ENCODE measurements at regions of chr9 and their contacts with region 1.

Region 1: DNA sequence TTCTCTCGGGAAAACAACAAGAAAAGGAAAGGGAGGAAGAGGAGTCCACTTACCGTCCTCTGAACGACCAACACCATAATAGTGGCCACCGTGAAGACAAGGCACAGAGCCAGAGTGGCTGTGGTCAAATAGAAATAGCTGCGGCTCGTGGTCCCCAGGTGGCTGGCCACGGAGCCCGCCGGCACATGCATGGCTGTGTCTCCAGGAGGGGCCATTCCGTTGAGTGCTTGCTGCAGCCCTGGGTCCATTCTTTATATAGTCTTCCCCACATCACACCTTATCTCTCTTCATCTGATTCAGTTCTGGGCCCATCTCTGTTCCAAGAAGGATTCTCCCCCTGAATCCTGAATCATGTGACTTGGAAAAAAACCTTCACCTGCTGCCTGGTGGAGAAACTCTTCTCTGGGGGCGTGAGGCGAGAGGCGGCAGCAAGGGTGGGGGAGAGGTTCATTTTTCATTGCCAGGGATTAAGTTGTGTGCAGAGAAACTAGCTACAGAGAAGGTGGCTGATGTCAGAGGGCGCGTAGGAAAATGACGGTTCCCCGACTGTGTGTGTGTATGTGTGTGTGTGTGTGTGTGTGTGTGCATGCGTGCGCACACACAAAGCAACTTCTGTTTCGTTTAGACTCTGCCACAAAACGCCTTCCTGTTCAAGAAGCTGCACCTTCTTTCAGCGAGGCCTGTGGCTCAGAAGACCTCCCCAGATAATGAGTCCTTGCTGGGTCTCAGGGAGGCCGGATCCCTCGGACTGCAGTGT is at the start of gene TNFSF8:
- DNase-seq: peak; percentile 90
- ATAC-seq: peak; percentile 85
- H3K4me3 Mint-ChIP-seq: peak within 1 kb of the TSS; percentile 85
- H3K27ac Mint-ChIP-seq: peak within 1 kb of the TSS; percentile 98
- H3K4me1 Mint-ChIP-seq: peaks cover 49% of the 10 kb centered on the region
- H3K27me3 Mint-ChIP-seq: no peaks in the 10 kb centered on the region
- total RNA-seq, gene TNFSF8: 42.3 to 48.2 TPM

Region 2: GRCh38 chr9:114397848-114398605 is 532.2 kb before region 1 on chr9:
- CTCF ChIA-PET with region 1: no interaction called
- POLR2A ChIA-PET with region 1: no interaction called
- intact Hi-C with region 1: loop called in 1 of 2 experiments (anchors 5 kb)
- DNase-seq: peak; percentile 98
- ATAC-seq: peak; percentile 87
- H3K4me3 Mint-ChIP-seq: peak overlapping the region; percentile 93
- H3K27ac Mint-ChIP-seq: peak overlapping the region; percentile 89
- H3K4me1 Mint-ChIP-seq: peaks cover 46% of the 10 kb centered on the region
- H3K27me3 Mint-ChIP-seq: no peaks in the 10 kb centered on the region

Region 3: DNA sequence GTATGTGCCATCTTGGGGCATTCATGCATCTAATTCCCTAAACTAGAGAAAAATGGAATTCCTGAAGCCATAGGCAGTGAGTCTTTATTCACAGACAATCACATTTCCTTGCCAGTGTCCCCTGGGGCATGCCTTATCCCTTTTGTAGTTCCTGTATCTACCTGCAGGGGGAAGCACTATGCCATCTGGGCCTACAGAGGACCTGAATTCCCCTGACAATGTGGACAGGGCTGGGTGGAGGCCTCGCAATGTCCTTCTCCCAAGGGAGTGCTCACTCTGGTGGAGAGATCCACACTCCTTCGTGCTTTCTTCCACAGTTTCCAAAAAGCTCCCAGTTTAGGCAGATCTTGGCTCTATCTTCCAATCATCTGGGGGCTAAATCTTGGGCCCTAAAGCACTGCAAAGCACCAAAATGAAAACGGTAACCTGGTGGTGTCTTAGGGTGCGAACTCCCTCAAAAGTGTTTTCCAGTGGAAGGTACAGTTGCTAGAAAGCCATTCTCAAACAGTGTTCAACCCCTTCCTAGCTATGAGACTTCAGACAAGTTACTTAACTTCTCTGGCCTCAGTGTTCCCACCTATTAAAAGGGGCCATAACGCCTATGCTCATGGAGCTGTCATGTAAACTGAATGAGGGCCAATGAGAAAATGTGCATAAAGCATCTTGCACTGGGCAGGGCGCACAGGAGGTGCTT is 442.5 kb before region 1 on chr9:
- CTCF ChIA-PET with region 1: no interaction called
- POLR2A ChIA-PET with region 1: no interaction called
- intact Hi-C with region 1: no loop called
- DNase-seq: peak; percentile 72
- ATAC-seq: peak; percentile 63
- H3K4me3 Mint-ChIP-seq: no peak overlapping the region
- H3K27ac Mint-ChIP-seq: no peak overlapping the region
- H3K4me1 Mint-ChIP-seq: peaks cover 25% of the 10 kb centered on the region
- H3K27me3 Mint-ChIP-seq: no peaks in the 10 kb centered on the region

Region 4: DNA sequence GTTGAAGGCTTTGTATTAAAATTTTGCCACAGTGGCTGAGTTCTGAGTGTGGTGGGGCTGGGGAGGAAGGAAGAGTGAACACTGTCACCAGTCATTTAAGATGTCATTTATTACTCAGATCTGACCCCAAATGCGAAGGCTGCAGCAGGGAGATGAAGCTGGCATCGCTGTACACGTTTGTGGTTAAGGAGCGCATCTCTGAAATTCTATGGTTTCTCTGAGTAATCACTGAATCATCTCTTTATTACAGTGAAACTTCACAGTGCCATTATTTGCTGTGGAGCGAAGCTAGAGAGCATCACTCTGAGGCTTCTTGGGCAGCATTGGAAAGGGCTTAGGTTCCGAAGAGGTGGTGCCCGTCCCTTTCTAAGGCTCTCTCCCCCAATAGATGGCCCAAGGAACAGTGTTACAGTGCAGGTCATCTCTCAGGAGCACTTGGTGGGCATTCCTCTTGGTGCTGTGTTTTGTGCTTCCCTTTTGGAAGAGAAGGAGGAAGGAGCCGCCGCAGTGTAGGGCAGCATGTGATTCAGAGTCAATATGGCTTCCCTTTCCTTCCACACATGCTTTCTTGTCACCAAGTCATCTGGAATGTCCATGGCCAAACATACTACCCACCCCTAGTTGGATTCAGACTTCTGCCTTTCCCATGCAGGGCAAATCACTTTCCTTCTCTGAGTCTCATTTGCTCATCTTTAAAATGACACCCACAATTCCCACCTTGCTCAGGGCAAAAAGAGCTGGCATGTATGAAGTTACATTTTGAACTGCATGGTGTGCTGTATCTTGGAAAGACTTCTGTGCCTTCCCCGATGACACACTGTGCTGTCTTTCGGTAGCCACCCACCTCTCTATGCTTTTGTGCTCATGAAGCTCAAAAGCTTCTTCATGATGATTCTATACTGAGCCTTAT is 238.9 kb before region 1 on chr9:
- CTCF ChIA-PET with region 1: interaction called, 3 read pairs
- POLR2A ChIA-PET with region 1: interaction called, 12 read pairs
- intact Hi-C with region 1: no loop called
- DNase-seq: peak; percentile 87
- ATAC-seq: peak; percentile 75
- H3K4me3 Mint-ChIP-seq: peak overlapping the region; percentile 48
- H3K27ac Mint-ChIP-seq: peak overlapping the region; percentile 98
- H3K4me1 Mint-ChIP-seq: peaks cover 94% of the 10 kb centered on the region
- H3K27me3 Mint-ChIP-seq: no peaks in the 10 kb centered on the region

Region 5: DNA sequence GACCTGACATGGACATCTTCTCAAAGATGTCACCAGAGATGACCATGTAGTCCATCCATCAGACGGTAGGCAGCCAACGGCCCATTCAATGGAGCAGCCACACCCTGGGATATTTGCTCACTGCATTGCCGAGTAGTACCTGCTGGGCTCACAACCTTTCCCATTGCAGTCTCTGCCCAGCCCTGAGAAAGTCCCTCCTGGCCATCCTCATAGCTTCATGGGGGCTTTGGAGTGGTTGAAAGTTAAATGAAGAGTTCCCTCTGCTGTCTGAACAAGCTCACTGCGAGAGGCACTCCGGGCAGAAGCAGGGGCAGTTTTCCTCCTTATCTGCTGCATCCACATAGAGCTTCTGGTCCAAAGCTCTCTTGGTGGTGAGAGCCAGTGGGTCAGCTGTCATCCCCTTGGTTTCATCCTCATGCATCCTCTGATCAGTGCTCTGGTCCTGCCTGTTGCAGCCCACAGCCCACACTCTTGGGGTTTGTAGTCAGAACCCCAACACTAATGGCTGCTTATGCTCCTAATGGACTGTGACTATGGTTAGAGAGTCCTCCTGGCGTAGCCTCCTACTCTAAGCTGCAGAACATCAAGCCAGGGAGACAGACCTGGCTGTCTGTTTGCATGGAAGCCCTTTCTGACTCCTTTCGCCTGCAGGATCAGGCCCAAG is 23.2 kb before region 1 on chr9:
- CTCF ChIA-PET with region 1: interaction called, 17 read pairs
- POLR2A ChIA-PET with region 1: interaction called, 4 read pairs
- intact Hi-C with region 1: loop called in 1 of 2 experiments (anchors 2 kb)
- DNase-seq: peak; percentile 49
- ATAC-seq: peak; percentile 23
- H3K4me3 Mint-ChIP-seq: no peak overlapping the region
- H3K27ac Mint-ChIP-seq: peak overlapping the region; percentile 86
- H3K4me1 Mint-ChIP-seq: peaks cover 58% of the 10 kb centered on the region
- H3K27me3 Mint-ChIP-seq: no peaks in the 10 kb centered on the region

Region 6: GRCh38 chr9:114958021-114958843 is 28.0 kb after region 1 on chr9:
- CTCF ChIA-PET with region 1: interaction called, 9 read pairs
- POLR2A ChIA-PET with region 1: interaction called, 7 read pairs
- intact Hi-C with region 1: loop called (anchors 1 to 2 kb)
- DNase-seq: peak; percentile 68
- ATAC-seq: peak; percentile 83
- H3K4me3 Mint-ChIP-seq: peak overlapping the region; percentile 68
- H3K27ac Mint-ChIP-seq: peak overlapping the region; percentile 96
- H3K4me1 Mint-ChIP-seq: peaks cover 56% of the 10 kb centered on the region
- H3K27me3 Mint-ChIP-seq: no peaks in the 10 kb centered on the region

Region 7: DNA sequence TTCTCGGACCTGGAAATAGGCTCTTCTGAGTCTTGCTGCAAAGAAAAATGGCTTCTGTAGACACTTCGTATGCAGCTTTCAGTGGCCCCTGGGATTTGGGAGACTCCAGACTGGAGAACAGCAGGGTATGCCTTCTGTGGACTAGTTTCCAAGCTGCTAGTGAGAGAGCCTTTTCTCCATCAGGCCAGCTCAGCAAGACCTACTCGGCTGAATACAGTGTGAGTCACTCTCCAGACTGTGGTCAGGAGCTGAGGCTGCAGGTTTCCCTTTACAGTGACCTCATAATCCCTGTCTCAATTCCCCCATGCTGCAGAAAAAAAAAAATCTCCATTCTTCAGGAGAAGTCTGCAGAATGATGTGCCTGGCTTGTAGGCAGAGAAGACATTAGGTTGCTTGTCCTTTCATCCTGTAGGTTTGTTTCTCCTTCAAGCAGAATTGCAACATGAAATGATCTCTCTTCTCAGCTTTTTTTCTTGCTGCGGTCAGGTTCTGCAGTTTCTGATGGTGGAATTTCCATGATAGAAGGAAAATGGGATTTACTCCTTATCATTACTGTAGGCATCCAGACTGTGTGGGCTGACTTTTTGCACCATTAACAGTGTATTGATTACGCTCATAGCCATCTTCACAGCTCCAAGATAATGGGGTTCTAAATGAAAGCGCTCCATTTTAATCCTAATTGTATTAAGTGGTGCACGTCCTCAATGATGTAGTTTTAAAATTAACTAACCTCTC is 78.5 kb after region 1 on chr9:
- CTCF ChIA-PET with region 1: interaction called, 44 read pairs
- POLR2A ChIA-PET with region 1: interaction called, 12 read pairs
- intact Hi-C with region 1: loop called in 1 of 2 experiments (anchors 2 kb)
- DNase-seq: peak; percentile 62
- ATAC-seq: peak; percentile 45
- H3K4me3 Mint-ChIP-seq: no peak overlapping the region
- H3K27ac Mint-ChIP-seq: peak overlapping the region; percentile 11
- H3K4me1 Mint-ChIP-seq: peaks cover 85% of the 10 kb centered on the region
- H3K27me3 Mint-ChIP-seq: no peaks in the 10 kb centered on the region

Region 8: GRCh38 chr9:115071176-115071575 is 140.9 kb after region 1 on chr9:
- CTCF ChIA-PET with region 1: no interaction called
- POLR2A ChIA-PET with region 1: no interaction called
- intact Hi-C with region 1: no loop called
- DNase-seq: no peak
- ATAC-seq: no peak
- H3K4me3 Mint-ChIP-seq: no peak overlapping the region
- H3K27ac Mint-ChIP-seq: no peak overlapping the region
- H3K4me1 Mint-ChIP-seq: no peaks in the 10 kb centered on the region
- H3K27me3 Mint-ChIP-seq: peaks cover 11% of the 10 kb centered on the region

Region 9: DNA sequence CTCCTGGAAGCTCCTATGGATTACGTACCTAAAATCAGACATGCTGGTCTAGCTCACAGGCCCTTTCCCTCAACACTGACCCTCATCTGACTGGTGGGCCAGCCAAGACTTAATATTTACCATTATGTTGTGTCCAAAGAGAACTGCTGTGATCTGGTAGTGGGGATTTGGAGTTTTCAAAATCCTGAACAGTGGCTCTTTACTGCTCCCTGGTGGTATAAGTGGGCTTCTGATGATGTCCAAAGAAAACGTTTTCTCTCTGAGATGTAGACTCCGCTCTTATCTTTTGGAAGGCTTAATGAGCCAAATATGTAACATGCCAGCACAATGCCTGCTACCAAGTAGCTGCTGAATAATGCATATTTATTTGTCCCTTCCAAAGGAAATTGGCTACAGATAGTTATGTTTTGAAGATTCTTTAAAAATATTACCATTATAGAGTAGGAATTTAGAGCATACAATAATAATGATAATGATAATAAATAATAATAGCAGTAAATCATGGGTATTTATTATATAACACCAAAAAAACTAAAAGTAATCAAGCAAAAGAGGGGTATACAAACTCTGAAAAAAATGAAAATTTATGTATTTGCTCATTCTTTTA is 594.3 kb after region 1 on chr9:
- CTCF ChIA-PET with region 1: no interaction called
- POLR2A ChIA-PET with region 1: no interaction called
- intact Hi-C with region 1: loop called in 1 of 2 experiments (anchors 10 kb)
- DNase-seq: peak; percentile 16
- ATAC-seq: no peak
- H3K4me3 Mint-ChIP-seq: no peak overlapping the region
- H3K27ac Mint-ChIP-seq: no peak overlapping the region
- H3K4me1 Mint-ChIP-seq: no peaks in the 10 kb centered on the region
- H3K27me3 Mint-ChIP-seq: peaks cover 28% of the 10 kb centered on the region